GM13977 (cell line): ENCODE measurements at regions of chr7 and their contacts with region 1.

Region 1: DNA sequence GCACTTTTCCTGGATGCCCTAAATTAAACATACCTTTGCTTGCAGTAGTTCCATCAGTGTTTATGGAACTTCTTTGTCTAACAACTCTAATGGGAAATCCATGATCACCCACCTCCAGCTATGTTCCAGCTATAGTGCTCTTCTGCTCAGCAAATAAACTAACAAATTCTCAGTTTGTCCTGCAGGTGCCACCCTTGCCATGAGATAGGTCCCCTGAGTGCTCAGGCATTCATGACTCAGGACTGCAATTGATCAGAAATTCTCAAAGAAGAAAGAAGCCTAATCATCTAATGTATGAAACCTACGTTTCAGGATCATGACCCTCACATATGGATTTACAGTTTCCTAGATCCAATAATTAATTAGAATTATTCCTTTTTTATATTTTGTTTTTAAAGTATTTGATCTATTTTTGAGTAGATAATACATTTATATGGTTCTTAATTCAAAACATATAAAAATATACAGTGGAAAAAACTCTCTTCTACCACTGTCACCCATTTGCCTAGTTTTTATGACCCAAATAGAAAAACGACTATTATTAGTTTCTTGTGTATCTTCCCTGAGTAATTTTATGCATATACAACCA is 48.7 kb upstream of the DYNC1I1 start:
- DNase-seq: peak; percentile 33
- CTCF ChIP-seq: peak; percentile 57

Region 2: GRCh38 chr7:95871078-95871782 is 147.5 kb after region 1 on chr7:
- in situ Hi-C with region 1: loop called (anchors 25 kb)
- DNase-seq: peak; percentile 37
- CTCF ChIP-seq: peak; percentile 68